K562 (cell line): ENCODE measurements at regions of chr20 and their contacts with region 1.

Region 1: DNA sequence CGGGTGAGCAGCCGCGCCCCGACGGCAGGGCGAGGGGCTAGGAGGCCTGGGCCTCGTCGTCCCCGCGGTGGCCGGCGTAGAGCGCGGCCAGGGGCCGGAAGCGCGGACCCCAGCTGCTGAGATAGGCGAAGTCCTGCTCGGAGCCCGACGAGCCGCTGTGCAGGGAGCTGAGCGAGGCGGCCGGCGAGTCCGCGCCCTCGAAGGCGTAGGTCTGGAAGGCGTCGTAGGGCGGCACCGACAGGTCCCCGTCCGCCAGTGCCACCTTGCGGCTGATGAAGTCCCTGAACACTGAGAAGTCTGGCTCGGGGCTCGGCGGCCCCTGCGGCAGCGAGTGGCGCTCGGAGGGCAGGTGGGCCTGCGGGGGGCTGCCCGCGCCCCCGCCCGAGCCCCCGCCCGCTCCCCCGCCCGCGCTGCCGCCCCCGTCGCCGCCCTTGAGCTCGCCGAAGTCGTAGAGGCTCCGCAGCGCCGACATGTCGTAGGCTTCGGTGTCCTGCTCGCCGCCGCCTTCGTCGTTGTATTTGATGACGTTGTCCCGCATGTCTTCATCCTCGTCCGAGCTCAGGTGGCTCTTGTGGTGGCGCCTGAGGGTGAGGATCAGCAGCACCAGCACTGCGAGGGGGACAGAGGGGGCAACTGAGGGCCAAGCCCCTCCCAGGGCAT is 56.5 kb downstream of the CD40 start:
- DNase-seq: peak; percentile 79 to 88 (median 84)
- ATAC-seq: peak; percentile 99
- H3K4me3 ChIP-seq: no peak overlapping the region
- H3K27ac ChIP-seq: no peak overlapping the region
- H3K4me1 ChIP-seq: peaks cover 0 to 10% of the 10 kb centered on the region in 2 experiments; a peak in 1 of 5 replicates
- H3K27me3 ChIP-seq: peaks cover 21 to 73% of the 10 kb centered on the region in 2 experiments
- CTCF ChIP-seq: peak; percentile 51 to 88 (median 72)
- EP300 ChIP-seq: no peak
- POLR2A ChIP-seq: no peak
- RAD21 ChIP-seq: peak in 1 of 2 experiments; percentile 54; a peak in 3 of 4 replicates

Region 2: DNA sequence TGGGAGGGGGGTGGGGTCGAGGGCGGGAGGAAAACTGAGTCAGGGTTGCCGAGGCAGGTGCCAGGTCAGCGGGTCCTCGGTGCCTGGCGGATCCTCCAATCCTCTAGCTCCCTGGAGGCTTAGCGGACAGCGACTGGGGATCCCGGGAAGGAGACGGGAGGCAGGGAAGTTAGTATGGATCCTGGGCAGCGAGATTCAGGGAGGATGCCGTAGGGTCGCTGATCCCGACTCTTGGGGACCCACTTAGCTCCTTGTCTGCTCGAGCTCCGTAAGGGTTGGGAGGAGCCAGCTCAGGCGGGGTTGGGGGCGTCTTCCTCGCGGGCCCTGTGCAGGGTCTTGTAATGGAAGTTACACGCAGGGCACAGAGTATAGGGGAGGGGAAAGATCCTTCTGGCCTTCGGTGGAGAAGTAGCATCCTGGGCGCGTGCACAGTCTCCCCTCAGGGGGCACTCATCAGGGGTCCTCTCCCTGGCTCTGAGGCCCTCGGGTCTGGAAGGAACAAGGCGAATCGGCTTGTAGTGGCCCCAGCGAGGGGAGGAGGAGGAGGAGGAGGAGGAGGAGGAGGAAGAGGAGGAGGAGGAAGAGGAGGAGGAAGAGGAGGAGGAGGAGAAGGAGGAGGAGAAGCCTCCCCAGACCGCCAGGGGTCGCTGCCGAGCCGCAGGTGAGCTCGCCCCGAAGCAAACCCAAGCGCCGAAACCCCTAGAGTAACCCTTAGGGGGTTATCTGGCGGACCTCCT is 152.0 kb before region 1 on chr20:
- CTCF ChIA-PET with region 1: interaction called, 3 read pairs
- POLR2A ChIA-PET with region 1: no interaction called
- in situ Hi-C with region 1: no loop called
- intact Hi-C with region 1: loop called (anchors 5 kb)
- DNase-seq: peak; percentile 74 to 78 (median 76)
- ATAC-seq: peak; percentile 63
- H3K4me3 ChIP-seq: peak overlapping the region; percentile 78; the same call in 1 of the 2 replicates
- H3K27ac ChIP-seq: no peak overlapping the region
- H3K4me1 ChIP-seq: peaks cover 14 to 23% of the 10 kb centered on the region in 2 experiments
- H3K27me3 ChIP-seq: 0 out of 5 replicates have a peak, but pooled peaks cover 0 to 7% of the 10 kb centered on the region in 2 experiments
- CTCF ChIP-seq: peak; percentile 71 to 85 (median 85)
- EP300 ChIP-seq: no peak
- POLR2A ChIP-seq: no peak
- RAD21 ChIP-seq: peak; percentile 47 to 76

Region 3: GRCh38 chr20:46283426-46284039 is 108.9 kb after region 1 on chr20:
- CTCF ChIA-PET with region 1: no interaction called
- POLR2A ChIA-PET with region 1: no interaction called
- in situ Hi-C with region 1: no loop called
- intact Hi-C with region 1: no loop called
- DNase-seq: no peak
- ATAC-seq: no peak
- H3K4me3 ChIP-seq: no peak overlapping the region
- H3K27ac ChIP-seq: no peak overlapping the region
- H3K4me1 ChIP-seq: peaks cover 3% of the 10 kb centered on the region in 2 experiments; a peak in 2 of 5 replicates
- H3K27me3 ChIP-seq: peaks cover 32 to 66% of the 10 kb centered on the region in 2 experiments
- CTCF ChIP-seq: no peak
- EP300 ChIP-seq: no peak
- POLR2A ChIP-seq: no peak
- RAD21 ChIP-seq: no peak